ENCODE measurements at regions of chr3 and their contacts with region 1.

Region 1: GRCh38 chr3:63193629-63194028 is 84.5 kb upstream of the SYNPR start:
- DNase-seq: no peak
- ATAC-seq: peak; percentile 66

Region 2: DNA sequence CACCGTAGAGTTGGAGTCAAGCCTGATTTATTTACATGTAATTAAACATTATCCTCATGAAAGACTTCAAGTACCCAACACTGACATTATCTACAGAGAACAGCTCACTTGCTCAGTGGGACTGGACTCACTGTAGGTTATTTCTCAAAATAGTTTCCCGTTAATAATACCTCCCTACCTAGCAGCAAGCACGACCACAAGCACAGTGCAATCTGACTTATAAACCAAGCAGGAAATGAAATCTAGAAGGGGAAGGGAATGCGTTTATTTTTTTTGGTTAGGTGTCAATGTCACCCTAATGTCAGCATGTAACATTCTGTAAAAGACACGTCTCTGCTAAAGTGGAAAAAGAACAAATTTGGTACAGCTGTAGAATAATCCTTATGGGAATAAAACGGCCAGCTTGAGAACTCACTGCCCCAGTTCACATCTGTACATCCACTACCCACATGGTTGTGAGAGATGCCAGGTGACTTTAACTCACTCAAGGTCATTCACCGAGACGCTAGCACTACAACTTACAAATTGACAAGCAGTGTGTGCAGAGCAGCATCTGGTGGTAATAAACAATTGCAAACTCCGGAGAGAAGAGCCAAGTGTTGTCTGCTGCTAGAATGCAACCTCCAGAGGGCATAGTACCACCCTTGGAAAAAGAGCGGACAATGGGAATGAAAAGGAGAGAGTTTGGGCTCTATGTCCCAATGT is 561.0 kb before region 1 on chr3:
- intact Hi-C with region 1: loop called in 1 of 2 experiments (anchors 10 kb)
- DNase-seq: no peak
- ATAC-seq: no peak

Region 3: GRCh38 chr3:63096248-63097058 is 97.2 kb before region 1 on chr3:
- intact Hi-C with region 1: no loop called
- DNase-seq: peak in 1 of 2 donors; percentile 1
- ATAC-seq: no peak

Region 4: DNA sequence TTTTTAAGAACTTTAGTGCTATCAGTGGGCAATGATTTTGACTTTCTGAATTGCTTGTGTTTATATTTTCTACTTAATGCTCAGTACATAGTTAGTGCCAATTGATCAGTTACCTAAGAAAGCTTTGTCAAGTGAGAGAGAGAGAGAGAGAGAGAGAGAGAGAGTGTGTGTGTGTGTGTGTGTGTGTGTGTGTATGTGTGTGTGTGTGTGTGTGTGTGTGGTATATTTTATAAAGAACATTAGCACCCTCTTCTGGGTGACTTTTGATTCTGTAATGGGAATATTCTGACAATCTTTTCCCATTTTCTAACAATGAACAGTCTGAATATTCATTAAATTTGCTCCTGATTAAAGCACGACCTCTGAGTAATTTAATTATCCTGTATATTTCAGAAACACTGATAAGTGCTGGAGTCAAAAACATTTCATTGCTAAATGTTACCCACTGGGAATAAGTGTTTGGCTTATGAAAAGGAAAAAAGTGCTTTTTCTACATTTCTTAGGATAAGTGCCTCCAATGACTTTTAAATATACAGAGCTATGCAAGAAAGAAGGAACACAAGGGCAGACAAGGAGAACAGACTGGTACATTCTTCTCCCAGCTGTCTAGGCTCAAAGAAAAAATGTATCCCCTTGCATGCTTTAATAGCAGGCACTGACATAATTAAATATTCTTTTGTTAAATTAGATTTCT is 52.1 kb after region 1 on chr3:
- intact Hi-C with region 1: no loop called
- DNase-seq: no peak
- ATAC-seq: no peak